GM12878 (cell line): ENCODE measurements at regions of chr1 and their contacts with region 1.

Region 1: GRCh38 chr1:89843281-89844121 is 22.7 kb downstream of the LRRC8D start:
- DNase-seq: no peak
- ATAC-seq: peak; percentile 94
- H3K4me3 ChIP-seq: peak overlapping the region; percentile 95
- H3K27ac ChIP-seq: peak overlapping the region; percentile 67
- H3K4me1 ChIP-seq: peaks cover 13% of the 10 kb centered on the region
- H3K27me3 ChIP-seq: no peaks in the 10 kb centered on the region
- CTCF ChIP-seq: peak; percentile 61 to 69 (median 64); a peak in 5 of 6 replicates
- EP300 ChIP-seq: no peak
- POLR2A ChIP-seq: peak; percentile 83
- RAD21 ChIP-seq: peak; percentile 41; the same call in 1 of the 2 replicates

Region 2: GRCh38 chr1:89804642-89805237 is 38.8 kb before region 1 on chr1:
- CTCF ChIA-PET with region 1: interaction called, 9 read pairs
- POLR2A ChIA-PET with region 1: no interaction called
- RAD21 ChIA-PET with region 1: interaction called, 4 read pairs
- SMC1A ChIA-PET with region 1: interaction called, 6 read pairs
- in situ Hi-C with region 1: no loop called
- intact Hi-C with region 1: loop called (anchors 2 kb)
- DNase-seq: peak; percentile 69
- ATAC-seq: peak; percentile 94
- H3K4me3 ChIP-seq: no peak overlapping the region
- H3K27ac ChIP-seq: no peak overlapping the region
- H3K4me1 ChIP-seq: peaks cover 10% of the 10 kb centered on the region
- H3K27me3 ChIP-seq: no peaks in the 10 kb centered on the region; a peak in 1 of 4 replicates
- CTCF ChIP-seq: peak; percentile 86 to 96 (median 88)
- EP300 ChIP-seq: no peak
- POLR2A ChIP-seq: no peak
- RAD21 ChIP-seq: peak; percentile 99

Region 3: GRCh38 chr1:89833183-89834082 is 10.1 kb before region 1 on chr1:
- CTCF ChIA-PET with region 1: interaction called, 19 read pairs
- POLR2A ChIA-PET with region 1: interaction called, 9 read pairs
- RAD21 ChIA-PET with region 1: interaction called, 4 read pairs
- SMC1A ChIA-PET with region 1: interaction called, 4 read pairs
- in situ Hi-C with region 1: no loop called
- intact Hi-C with region 1: no loop called
- DNase-seq: no peak
- ATAC-seq: no peak
- H3K4me3 ChIP-seq: no peak overlapping the region
- H3K27ac ChIP-seq: no peak overlapping the region
- H3K4me1 ChIP-seq: no peaks in the 10 kb centered on the region
- H3K27me3 ChIP-seq: no peaks in the 10 kb centered on the region
- CTCF ChIP-seq: no peak
- EP300 ChIP-seq: no peak
- POLR2A ChIP-seq: no peak
- RAD21 ChIP-seq: no peak

Region 4: GRCh38 chr1:89953072-89953626 is 109.6 kb after region 1 on chr1:
- CTCF ChIA-PET with region 1: interaction called, 3 read pairs
- POLR2A ChIA-PET with region 1: interaction called, 8 read pairs
- RAD21 ChIA-PET with region 1: no interaction called
- SMC1A ChIA-PET with region 1: interaction called, 3 read pairs
- in situ Hi-C with region 1: no loop called
- intact Hi-C with region 1: loop called (anchors 5 kb)
- DNase-seq: peak; percentile 33
- ATAC-seq: peak; percentile 87
- H3K4me3 ChIP-seq: no peak overlapping the region
- H3K27ac ChIP-seq: 0 out of 2 replicates have a peak overlapping the region, but pooled peaks have one; percentile 31
- H3K4me1 ChIP-seq: peaks cover 19% of the 10 kb centered on the region
- H3K27me3 ChIP-seq: no peaks in the 10 kb centered on the region
- CTCF ChIP-seq: peak; percentile 13 to 57 (median 37); a peak in 4 of 6 replicates
- EP300 ChIP-seq: no peak
- POLR2A ChIP-seq: no peak
- RAD21 ChIP-seq: peak; percentile 79